Breast epithelium (tissue), 4 donors: ENCODE measurements at regions of chr16 and their contacts with region 1.

Region 1: GRCh38 chr16:54165174-54165911 is 121.2 kb downstream of the IRX3 start:
- DNase-seq: no peak
- H3K4me3 ChIP-seq: no peak overlapping the region
- H3K27ac ChIP-seq: no peak overlapping the region
- H3K4me1 ChIP-seq: no peaks in the 10 kb centered on the region
- H3K27me3 ChIP-seq: no peaks in the 10 kb centered on the region
- CTCF ChIP-seq: no peak
- POLR2A ChIP-seq: no peak

Region 2: DNA sequence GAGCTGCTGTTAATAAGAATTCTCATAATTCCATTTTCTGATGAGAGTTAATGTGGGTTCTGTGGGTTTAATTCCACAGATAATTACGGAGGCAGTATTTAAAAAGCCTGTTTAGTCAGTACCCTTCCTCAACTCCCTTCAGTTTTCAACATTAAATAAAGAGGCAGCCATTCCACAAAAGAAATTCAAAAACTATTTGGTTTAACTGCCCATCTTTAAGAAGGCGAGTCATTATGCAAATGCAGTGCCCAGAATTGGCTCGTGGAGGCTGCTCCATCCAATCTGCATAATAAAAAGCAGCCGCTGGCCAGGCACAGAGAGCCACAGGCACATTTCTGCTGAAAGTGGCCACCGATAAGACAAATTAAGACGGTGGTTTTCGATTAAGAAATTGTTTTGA is 1424.0 kb before region 1 on chr16:
- intact Hi-C with region 1: no loop called
- DNase-seq: no peak
- H3K4me3 ChIP-seq: no peak overlapping the region
- H3K27ac ChIP-seq: no peak overlapping the region
- H3K4me1 ChIP-seq: no peaks in the 10 kb centered on the region
- H3K27me3 ChIP-seq: no peaks in the 10 kb centered on the region
- CTCF ChIP-seq: no peak
- POLR2A ChIP-seq: no peak

Region 3: GRCh38 chr16:54015147-54015546 is 150.2 kb before region 1 on chr16:
- intact Hi-C with region 1: no loop called
- DNase-seq: no peak
- H3K4me3 ChIP-seq: no peak overlapping the region
- H3K27ac ChIP-seq: no peak overlapping the region
- H3K4me1 ChIP-seq: no peaks in the 10 kb centered on the region
- H3K27me3 ChIP-seq: no peaks in the 10 kb centered on the region
- CTCF ChIP-seq: no peak
- POLR2A ChIP-seq: no peak

Region 4: DNA sequence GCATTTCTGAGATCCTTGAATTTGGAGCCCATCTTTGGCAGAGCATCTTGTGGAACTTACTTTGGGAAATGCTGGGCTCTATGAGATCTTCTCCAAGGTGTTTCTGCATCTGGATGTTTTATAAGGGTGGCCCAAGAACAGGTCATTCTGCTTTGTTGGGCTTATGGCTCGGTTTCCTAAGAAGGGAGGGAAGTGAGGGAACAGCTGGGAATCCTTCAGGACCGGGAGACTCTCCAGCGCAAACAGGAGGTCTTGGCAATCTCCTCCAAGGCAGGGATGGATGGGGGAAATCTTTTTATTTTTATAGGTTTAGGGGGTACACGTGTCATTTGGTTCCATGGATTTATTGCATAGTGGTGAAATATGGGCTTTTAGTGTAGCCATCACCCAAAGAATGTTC is 66.6 kb after region 1 on chr16:
- intact Hi-C with region 1: no loop called
- DNase-seq: no peak
- H3K4me3 ChIP-seq: no peak overlapping the region
- H3K27ac ChIP-seq: no peak overlapping the region
- H3K4me1 ChIP-seq: no peaks in the 10 kb centered on the region
- H3K27me3 ChIP-seq: no peaks in the 10 kb centered on the region
- CTCF ChIP-seq: no peak
- POLR2A ChIP-seq: no peak

Region 5: DNA sequence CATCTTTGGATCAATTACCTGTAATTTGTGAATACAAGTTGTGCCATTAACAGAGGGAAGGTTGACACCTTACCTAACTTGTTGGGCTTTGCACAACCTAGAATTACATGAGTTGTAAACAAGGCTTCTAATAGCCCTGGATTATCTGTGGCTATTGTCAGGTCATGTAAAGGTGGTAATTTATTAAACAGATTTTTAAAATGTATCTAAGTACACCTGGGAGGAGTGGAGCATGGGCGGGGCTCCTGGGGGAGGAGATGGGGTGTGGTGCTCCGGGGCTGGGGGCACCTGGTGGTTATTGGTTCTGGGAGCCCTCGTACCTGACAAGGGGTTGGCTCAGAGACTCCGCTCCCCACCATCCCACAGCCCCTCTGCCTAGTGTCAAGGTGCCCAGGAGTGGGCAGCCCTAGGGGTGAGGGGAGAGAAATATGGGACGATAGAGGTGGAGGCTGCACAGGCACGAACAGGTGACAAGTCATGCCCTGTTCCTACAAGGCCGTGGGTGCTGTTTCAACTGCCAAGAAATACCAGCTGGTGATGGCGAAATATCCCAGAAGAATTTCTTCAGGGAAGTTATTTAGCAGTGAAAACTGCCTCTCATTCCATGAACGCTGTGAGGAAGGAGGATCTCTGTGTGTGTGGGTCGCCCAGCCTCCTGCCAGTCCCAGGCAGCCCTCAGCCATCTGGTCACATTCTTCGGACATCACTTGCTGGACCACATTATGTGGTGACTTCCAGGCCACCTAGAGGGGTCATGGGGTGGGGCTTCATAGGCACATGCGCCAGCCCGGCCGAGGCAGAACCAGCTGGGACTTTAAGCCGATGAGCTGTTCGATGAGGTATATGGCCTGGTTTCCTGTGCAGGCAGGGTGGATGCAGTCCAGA is 176.8 kb after region 1 on chr16:
- intact Hi-C with region 1: no loop called
- DNase-seq: peak in 1 of 2 donors; percentile 74
- H3K4me3 ChIP-seq: peak overlapping the region in 1 of 3 donors; percentile 31
- H3K27ac ChIP-seq: peak overlapping the region; percentile 75 to 91
- H3K4me1 ChIP-seq: no peaks in the 10 kb centered on the region
- H3K27me3 ChIP-seq: no peaks in the 10 kb centered on the region
- CTCF ChIP-seq: no peak
- POLR2A ChIP-seq: no peak

Region 6: GRCh38 chr16:55021595-55022475 is 856.5 kb after region 1 on chr16:
- intact Hi-C with region 1: loop called (anchors 5 kb)
- DNase-seq: no peak
- H3K4me3 ChIP-seq: no peak overlapping the region
- H3K27ac ChIP-seq: no peak overlapping the region
- H3K4me1 ChIP-seq: no peaks in the 10 kb centered on the region
- H3K27me3 ChIP-seq: no peaks in the 10 kb centered on the region
- CTCF ChIP-seq: no peak
- POLR2A ChIP-seq: no peak